Posterior cingulate gyrus (tissue), 11 donors: ENCODE measurements at regions of chr2 and their contacts with region 1.

Region 1: DNA sequence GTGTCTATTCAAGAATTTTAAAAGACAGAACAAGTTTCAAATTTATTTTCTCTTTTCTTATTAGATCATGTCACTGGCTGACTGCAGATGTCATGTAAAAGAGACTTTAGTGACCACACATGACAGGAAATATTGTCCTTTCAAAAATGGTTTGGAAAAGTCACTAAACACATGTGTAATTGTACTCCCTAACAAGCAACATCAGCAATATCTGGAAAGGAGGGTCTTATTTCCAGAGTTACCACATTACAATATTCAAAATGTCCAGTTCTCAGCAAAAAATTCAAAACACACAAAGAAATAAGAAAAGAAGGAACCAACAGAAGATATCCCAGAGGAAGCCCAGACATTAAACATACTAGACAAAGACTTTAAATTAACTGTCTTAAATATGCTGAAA is 197.1 kb downstream of the EN1 start:
- DNase-seq: no peak

Region 2: DNA sequence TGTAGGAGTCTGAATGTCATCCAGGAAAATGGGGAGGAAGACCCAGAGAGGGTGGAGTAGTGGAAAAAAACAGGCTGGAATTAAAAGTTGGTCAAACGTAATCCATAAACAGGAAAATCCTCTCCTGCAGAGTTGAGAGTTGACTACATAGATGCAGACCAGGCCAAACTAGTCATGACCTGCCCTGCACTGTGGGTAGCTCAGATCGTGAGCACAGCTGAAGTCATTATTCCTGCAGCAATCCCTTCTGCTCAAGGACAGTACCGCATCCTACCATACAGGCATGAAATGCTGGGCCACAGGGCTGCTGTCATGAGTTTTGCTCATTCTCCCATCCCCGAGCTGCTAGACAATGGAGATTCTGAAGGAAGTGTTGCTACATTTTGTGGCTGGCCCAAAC is 155.0 kb before region 1 on chr2:
- intact Hi-C with region 1: no loop called
- DNase-seq: no peak

Region 3: GRCh38 chr2:118697759-118698158 is 47.4 kb after region 1 on chr2:
- intact Hi-C with region 1: loop called (anchors 2 kb)
- DNase-seq: no peak

Region 4: GRCh38 chr2:119431155-119431975 is 781.0 kb after region 1 on chr2 and contains the start of gene TMEM37:
- intact Hi-C with region 1: no loop called
- DNase-seq: peak in 2 of 10 donors; percentile 40 to 80